CD8-positive, alpha-beta T cell (primary cell): ENCODE measurements at regions of chr3 and their contacts with region 1.

Region 1: GRCh38 chr3:107927361-107928083 is 163.3 kb downstream of the CD47 start:
- DNase-seq: peak; percentile 37 to 83 (median 66)
- ATAC-seq: peak; percentile 90
- H3K4me3 ChIP-seq: peak overlapping the region; percentile 63
- H3K4me3 Mint-ChIP-seq: peak overlapping the region; percentile 89
- H3K27ac ChIP-seq: no peak overlapping the region
- H3K27ac Mint-ChIP-seq: peak overlapping the region; percentile 33
- H3K4me1 ChIP-seq: peaks cover 11% of the 10 kb centered on the region
- H3K4me1 Mint-ChIP-seq: peaks cover 12% of the 10 kb centered on the region
- H3K27me3 ChIP-seq: peaks cover 0 to 3% of the 10 kb centered on the region in 2 experiments
- H3K27me3 Mint-ChIP-seq: peaks cover 4% of the 10 kb centered on the region
- CTCF ChIP-seq: peak; percentile 97

Region 2: GRCh38 chr3:107574650-107575049 is 352.9 kb before region 1 on chr3:
- CTCF ChIA-PET with region 1: interaction called, 4 read pairs
- POLR2A ChIA-PET with region 1: no interaction called
- intact Hi-C with region 1: loop called (anchors 5 to 10 kb)
- DNase-seq: peak in 2 of 9 experiments; percentile 30 to 42
- ATAC-seq: no peak
- H3K4me3 ChIP-seq: no peak overlapping the region
- H3K4me3 Mint-ChIP-seq: no peak overlapping the region
- H3K27ac ChIP-seq: no peak overlapping the region
- H3K27ac Mint-ChIP-seq: no peak overlapping the region
- H3K4me1 ChIP-seq: peaks cover 6% of the 10 kb centered on the region
- H3K4me1 Mint-ChIP-seq: peaks cover 46% of the 10 kb centered on the region
- H3K27me3 ChIP-seq: no peaks in the 10 kb centered on the region
- H3K27me3 Mint-ChIP-seq: no peaks in the 10 kb centered on the region
- CTCF ChIP-seq: peak; percentile 29

Region 3: DNA sequence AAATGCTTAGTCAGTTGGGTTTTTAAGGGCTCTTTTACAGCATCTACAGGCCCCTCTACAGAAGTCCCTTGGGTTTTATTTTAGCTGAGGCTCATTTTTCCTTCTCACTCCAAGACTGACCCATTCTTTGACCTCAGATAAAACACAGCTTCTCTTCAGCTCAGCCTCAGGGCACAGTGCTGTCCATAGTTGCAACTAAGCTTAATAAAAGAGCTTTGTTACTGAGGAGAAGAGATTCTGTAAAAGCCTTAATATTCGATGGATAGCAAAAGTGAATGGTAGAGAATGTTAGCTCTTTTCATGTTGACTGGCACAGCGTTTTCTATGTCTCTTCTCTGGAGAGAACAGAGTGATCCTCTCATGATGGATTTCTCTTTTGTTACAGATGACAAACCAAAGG is 126.8 kb before region 1 on chr3:
- CTCF ChIA-PET with region 1: no interaction called
- POLR2A ChIA-PET with region 1: no interaction called
- intact Hi-C with region 1: no loop called
- DNase-seq: no peak
- ATAC-seq: no peak
- H3K4me3 ChIP-seq: no peak overlapping the region
- H3K4me3 Mint-ChIP-seq: no peak overlapping the region
- H3K27ac ChIP-seq: no peak overlapping the region
- H3K27ac Mint-ChIP-seq: no peak overlapping the region
- H3K4me1 ChIP-seq: peaks cover 7% of the 10 kb centered on the region
- H3K4me1 Mint-ChIP-seq: peaks cover 17% of the 10 kb centered on the region
- H3K27me3 ChIP-seq: no peaks in the 10 kb centered on the region
- H3K27me3 Mint-ChIP-seq: no peaks in the 10 kb centered on the region
- CTCF ChIP-seq: no peak

Region 4: DNA sequence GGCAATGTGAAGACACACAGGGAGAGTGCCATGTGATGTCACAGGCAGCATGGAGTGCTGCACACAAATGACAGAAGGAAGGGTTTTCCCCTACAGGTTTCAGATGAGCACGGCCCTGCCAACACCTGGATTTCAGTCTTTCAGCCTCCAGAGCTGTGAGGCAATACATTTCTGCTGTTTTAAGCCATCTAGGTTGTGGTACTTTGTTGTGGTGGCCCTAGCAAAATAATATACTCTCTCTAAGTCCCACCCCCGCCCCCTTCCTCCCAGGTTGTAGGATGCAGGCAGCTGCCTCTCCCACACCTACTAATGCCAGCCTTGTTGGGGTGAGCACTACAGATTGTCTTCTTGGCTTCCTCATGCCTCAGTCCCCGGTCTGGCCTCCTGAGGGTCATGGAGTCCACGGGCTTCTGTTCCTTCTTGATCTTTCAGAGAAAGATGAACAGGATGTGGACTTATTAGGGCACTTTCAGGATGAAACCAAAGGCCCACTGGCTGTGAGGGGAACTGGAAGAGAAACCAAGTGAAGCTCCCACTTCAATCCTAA is 16.7 kb before region 1 on chr3:
- CTCF ChIA-PET with region 1: interaction called, 14 read pairs
- POLR2A ChIA-PET with region 1: no interaction called
- intact Hi-C with region 1: no loop called
- DNase-seq: peak in 2 of 9 experiments; percentile 20 to 22
- ATAC-seq: peak; percentile 51
- H3K4me3 ChIP-seq: no peak overlapping the region
- H3K4me3 Mint-ChIP-seq: no peak overlapping the region
- H3K27ac ChIP-seq: no peak overlapping the region
- H3K27ac Mint-ChIP-seq: no peak overlapping the region
- H3K4me1 ChIP-seq: peaks cover 5% of the 10 kb centered on the region
- H3K4me1 Mint-ChIP-seq: peaks cover 4% of the 10 kb centered on the region
- H3K27me3 ChIP-seq: no peaks in the 10 kb centered on the region
- H3K27me3 Mint-ChIP-seq: no peaks in the 10 kb centered on the region
- CTCF ChIP-seq: no peak

Region 5: DNA sequence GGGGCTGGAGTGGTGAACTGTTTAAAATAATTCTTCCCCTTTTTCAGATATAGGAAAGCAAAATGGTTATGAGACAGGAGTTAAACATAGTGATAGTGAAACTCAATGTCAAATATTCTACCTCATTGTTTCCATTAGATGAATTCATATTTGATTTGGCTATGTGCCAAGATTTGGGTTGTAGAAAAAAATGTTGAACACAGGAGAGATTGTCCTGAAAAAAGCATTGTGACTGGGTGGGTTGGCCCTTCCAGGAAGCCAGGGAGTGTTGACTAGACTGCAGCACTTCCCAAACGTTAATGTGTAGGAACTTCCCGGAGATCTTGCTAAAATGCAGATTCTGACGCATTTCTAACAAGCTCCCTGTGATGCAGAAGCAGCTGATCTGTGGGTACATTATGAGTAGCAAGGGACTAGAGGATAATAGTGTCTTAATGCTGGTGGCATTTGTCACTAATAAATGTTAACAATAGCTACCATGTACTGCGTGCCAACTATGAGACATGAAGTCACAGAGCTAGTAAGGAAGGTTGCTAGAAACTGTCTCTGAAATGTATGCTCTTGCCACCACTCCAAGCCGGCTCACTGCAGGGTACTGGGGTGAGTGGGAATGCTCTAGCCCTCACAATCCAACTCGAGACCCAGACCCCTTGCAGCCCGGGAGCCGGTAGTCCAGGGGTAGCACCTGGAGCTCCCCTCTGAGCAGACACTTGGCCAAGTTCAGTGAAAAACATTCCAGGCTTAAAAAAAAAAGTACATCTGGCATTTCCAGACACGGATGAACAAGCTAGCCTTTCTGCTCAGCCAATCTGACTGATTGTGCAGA is 42.7 kb after region 1 on chr3:
- CTCF ChIA-PET with region 1: interaction called, 10 read pairs
- POLR2A ChIA-PET with region 1: interaction called, 5 read pairs
- intact Hi-C with region 1: no loop called
- DNase-seq: no peak
- ATAC-seq: no peak
- H3K4me3 ChIP-seq: no peak overlapping the region
- H3K4me3 Mint-ChIP-seq: no peak overlapping the region
- H3K27ac ChIP-seq: no peak overlapping the region
- H3K27ac Mint-ChIP-seq: no peak overlapping the region
- H3K4me1 ChIP-seq: peaks cover 3% of the 10 kb centered on the region
- H3K4me1 Mint-ChIP-seq: peaks cover 16% of the 10 kb centered on the region
- H3K27me3 ChIP-seq: no peaks in the 10 kb centered on the region
- H3K27me3 Mint-ChIP-seq: no peaks in the 10 kb centered on the region
- CTCF ChIP-seq: no peak

Region 6: GRCh38 chr3:108090701-108091451 is 163.4 kb after region 1 on chr3 and contains the start of gene CD47:
- CTCF ChIA-PET with region 1: interaction called, 7 read pairs
- POLR2A ChIA-PET with region 1: no interaction called
- intact Hi-C with region 1: loop called in 1 of 2 experiments (anchors 5 kb)
- DNase-seq: peak; percentile 93 to 99 (median 97)
- ATAC-seq: peak; percentile 70
- H3K4me3 ChIP-seq: peak within 1 kb of the TSS; percentile 91 to 93
- H3K4me3 Mint-ChIP-seq: peak within 1 kb of the TSS; percentile 98
- H3K27ac ChIP-seq: peak within 1 kb of the TSS; percentile 93 to 94
- H3K27ac Mint-ChIP-seq: peak within 1 kb of the TSS; percentile 99
- H3K4me1 ChIP-seq: peaks cover 51% of the 10 kb centered on the region
- H3K4me1 Mint-ChIP-seq: peaks cover 39% of the 10 kb centered on the region
- H3K27me3 ChIP-seq: no peaks in the 10 kb centered on the region
- H3K27me3 Mint-ChIP-seq: no peaks in the 10 kb centered on the region
- CTCF ChIP-seq: no peak
- total RNA-seq, gene CD47: 118 to 125 TPM

Region 7: DNA sequence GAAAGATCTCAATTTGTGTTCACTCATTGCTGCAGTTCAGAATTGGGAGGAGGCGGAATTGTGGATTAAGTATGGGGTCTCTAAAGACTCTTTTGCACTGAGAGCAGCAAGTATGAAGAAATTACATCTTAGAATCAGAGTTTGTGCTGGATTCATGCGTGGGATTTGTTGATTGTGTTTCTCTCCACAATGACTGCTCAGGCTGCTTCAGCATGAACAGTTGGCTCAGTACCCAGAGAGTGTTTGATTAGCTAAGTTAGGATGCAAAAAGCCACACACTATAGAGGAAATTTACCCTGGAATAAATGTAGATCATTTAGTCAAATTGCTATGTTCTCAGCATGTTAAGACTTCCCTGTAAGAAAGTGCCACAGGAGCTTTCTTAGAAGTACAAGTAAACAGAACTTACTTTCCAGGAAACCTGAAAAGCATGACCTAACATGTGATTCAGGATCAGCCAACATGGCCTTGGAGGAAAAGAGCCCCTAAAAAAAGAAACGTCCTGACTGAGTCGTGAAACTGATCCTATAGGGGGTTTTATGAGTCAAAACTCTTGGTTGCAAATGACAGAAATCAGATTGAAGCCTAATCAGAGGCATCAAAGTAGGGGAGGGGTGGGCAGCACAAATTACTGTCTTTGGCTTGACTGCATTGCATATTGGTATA is 401.4 kb after region 1 on chr3:
- CTCF ChIA-PET with region 1: no interaction called
- POLR2A ChIA-PET with region 1: no interaction called
- intact Hi-C with region 1: loop called (anchors 5 kb)
- DNase-seq: no peak
- ATAC-seq: no peak
- H3K4me3 ChIP-seq: no peak overlapping the region
- H3K4me3 Mint-ChIP-seq: no peak overlapping the region
- H3K27ac ChIP-seq: no peak overlapping the region
- H3K27ac Mint-ChIP-seq: no peak overlapping the region
- H3K4me1 ChIP-seq: no peaks in the 10 kb centered on the region
- H3K4me1 Mint-ChIP-seq: peaks cover 6% of the 10 kb centered on the region
- H3K27me3 ChIP-seq: no peaks in the 10 kb centered on the region
- H3K27me3 Mint-ChIP-seq: no peaks in the 10 kb centered on the region
- CTCF ChIP-seq: no peak